ENCODE measurements at regions of chr20 and their contacts with region 1.

Region 1: GRCh38 chr20:64038565-64039292 is 2.7 kb downstream of the C20orf204 start:
- DNase-seq: no peak
- H3K4me3 ChIP-seq: peak overlapping the region; percentile 42 to 72 (median 58)
- H3K27ac ChIP-seq: peak overlapping the region; percentile 68 to 87 (median 75)
- H3K4me1 ChIP-seq: peaks cover 34 to 72% (median 44%) of the 10 kb centered on the region in 3 donors
- H3K27me3 ChIP-seq: peaks cover 0 to 73% (median 0%) of the 10 kb centered on the region in 4 donors
- CTCF ChIP-seq: peak; percentile 54 to 74 (median 62)
- POLR2A ChIP-seq: no peak

Region 2: GRCh38 chr20:63980806-63981728 is 57.7 kb before region 1 on chr20 and contains the start of gene PRPF6:
- intact Hi-C with region 1: loop called (anchors 10 kb)
- DNase-seq: peak; percentile 73
- H3K4me3 ChIP-seq: peak within 1 kb of the TSS; percentile 81 to 99 (median 90)
- H3K27ac ChIP-seq: peak within 1 kb of the TSS; percentile 86 to 95 (median 89)
- H3K4me1 ChIP-seq: peaks cover 37 to 56% (median 44%) of the 10 kb centered on the region in 3 donors
- H3K27me3 ChIP-seq: no peaks in the 10 kb centered on the region
- CTCF ChIP-seq: peak; percentile 68 to 97 (median 78)
- POLR2A ChIP-seq: peak in 3 of 4 donors; percentile 61 to 75 (median 67)
- total RNA-seq, gene PRPF6: 34.1 to 57.4 (median 45.8) TPM

Region 3: DNA sequence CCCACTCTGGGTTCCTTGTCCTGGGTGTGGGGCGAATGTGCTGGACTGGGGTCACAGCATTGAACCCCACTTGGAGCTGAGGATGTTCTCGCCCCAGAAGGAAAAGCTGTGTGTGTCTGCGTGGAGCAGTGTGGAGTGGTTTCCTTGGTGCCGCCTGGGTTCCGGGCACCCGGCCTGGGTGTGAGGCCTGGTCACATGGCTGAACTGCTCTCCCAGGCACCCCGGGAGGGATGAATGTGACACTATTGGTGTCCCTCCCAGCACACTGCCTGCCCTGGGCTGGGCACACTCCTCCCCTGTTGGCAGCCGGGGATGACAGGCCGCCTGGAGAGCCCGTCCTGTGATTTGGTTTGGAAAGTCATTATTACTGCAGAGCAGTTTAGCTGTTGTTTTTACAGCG is 137.8 kb after region 1 on chr20:
- intact Hi-C with region 1: no loop called
- DNase-seq: no peak
- H3K4me3 ChIP-seq: no peak overlapping the region
- H3K27ac ChIP-seq: no peak overlapping the region
- H3K4me1 ChIP-seq: no peaks in the 10 kb centered on the region
- H3K27me3 ChIP-seq: peaks cover 0 to 44% (median 0%) of the 10 kb centered on the region in 4 donors
- CTCF ChIP-seq: no peak
- POLR2A ChIP-seq: no peak

Region 4: GRCh38 chr20:64279826-64280459 is 241.2 kb after region 1 on chr20:
- intact Hi-C with region 1: no loop called
- DNase-seq: no peak
- H3K4me3 ChIP-seq: no peak overlapping the region
- H3K27ac ChIP-seq: no peak overlapping the region
- H3K4me1 ChIP-seq: no peaks in the 10 kb centered on the region
- H3K27me3 ChIP-seq: no peaks in the 10 kb centered on the region
- CTCF ChIP-seq: no peak
- POLR2A ChIP-seq: no peak

Measured in esophagus squamous epithelium (tissue), 5 donors.